AG04449 (cell line): ENCODE measurements at regions of chr16 and their contacts with region 1.

Region 1: GRCh38 chr16:84062734-84063640 is 20.4 kb upstream of the SLC38A8 start:
- DNase-seq: no peak
- H3K4me3 ChIP-seq: no peak overlapping the region
- CTCF ChIP-seq: peak; percentile 95

Region 2: DNA sequence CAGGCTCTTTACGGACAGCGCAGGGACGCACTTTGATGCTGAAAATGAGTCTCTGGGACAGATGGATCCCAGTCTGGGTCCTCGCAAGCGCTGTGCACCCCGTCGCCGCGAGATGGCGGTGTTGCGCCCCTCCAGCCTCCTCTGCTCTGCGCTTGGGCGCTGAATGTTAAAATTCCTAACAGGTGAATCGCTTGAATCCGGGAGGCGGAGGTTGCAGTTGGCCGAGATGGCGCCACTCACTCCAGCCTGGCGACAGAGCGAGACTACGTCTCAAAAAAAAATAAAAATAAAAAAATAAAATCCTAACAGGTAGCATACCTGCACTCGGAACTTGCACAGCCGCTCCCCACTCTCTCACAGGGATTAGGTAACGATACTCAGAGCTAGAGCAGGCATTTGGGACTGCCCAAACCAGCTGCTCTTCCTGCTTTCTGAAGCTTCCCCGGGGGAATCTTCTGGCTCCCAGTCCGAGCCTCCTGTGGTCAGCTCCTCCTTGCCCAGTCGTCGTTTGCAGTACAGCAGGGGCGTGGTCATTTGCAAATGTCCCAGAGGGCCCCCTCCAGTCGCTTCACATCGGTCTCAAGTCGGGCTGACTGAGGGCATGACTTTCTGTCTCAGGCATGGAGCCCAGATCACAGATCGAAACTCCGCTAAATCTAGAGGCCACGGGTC is 136.1 kb before region 1 on chr16:
- CTCF ChIA-PET with region 1: interaction called, 175 read pairs
- POLR2A ChIA-PET with region 1: no interaction called
- DNase-seq: no peak
- H3K4me3 ChIP-seq: peak overlapping the region; percentile 19; the same call in 1 of the 2 replicates
- CTCF ChIP-seq: peak; percentile 97

Region 3: DNA sequence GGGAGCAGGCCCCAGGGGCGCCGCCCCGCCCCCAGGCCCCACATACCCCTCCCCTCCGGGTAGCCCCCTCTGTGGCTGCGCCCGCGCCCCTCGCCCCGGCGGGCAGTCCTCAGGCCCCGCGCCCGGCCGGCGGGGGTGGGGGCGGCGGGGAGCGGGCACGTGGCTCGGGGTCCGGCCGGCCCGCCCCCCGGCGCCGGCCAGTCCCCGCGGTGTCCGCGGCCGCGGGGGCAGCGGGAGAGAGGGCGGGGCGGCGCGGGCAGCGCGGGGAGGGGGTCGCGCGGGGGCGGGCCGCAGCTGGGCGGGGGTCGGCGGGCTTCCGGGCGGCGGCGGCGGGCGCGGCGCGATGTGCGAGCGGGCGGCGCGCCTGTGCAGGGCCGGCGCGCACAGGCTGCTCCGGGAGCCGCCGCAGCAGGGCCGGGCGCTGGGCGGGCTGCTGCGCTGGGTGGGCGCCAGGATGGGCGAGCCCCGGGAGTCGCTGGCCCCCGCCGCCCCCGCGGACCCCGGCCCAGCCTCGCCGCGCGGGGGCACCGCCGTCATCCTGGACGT is 94.6 kb before region 1 on chr16:
- CTCF ChIA-PET with region 1: interaction called, 662 read pairs
- POLR2A ChIA-PET with region 1: no interaction called
- DNase-seq: no peak
- H3K4me3 ChIP-seq: peak overlapping the region; percentile 42
- CTCF ChIP-seq: no peak

Region 4: DNA sequence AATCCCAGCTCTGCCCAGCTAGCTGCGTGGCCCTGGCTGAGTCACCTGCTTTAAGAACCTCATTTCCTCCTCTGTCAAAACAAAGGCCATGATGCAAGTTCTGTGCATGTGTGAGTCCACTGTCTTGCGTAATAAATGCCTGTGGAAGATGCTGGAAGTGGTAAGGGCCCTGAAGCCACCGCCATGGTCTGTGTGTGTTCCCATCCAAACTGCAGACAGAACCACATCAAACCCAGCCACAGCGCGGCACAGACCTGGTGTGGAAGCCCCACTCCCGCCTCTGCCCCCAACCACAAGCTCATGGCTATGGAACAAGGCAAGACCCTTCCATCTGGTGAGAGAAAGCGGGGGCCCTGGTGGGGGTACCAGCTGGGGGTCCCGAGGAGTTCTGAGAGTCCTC is 68.9 kb before region 1 on chr16:
- CTCF ChIA-PET with region 1: interaction called, 21 read pairs
- POLR2A ChIA-PET with region 1: no interaction called
- DNase-seq: peak; percentile 76
- H3K4me3 ChIP-seq: no peak overlapping the region
- CTCF ChIP-seq: no peak

Region 5: DNA sequence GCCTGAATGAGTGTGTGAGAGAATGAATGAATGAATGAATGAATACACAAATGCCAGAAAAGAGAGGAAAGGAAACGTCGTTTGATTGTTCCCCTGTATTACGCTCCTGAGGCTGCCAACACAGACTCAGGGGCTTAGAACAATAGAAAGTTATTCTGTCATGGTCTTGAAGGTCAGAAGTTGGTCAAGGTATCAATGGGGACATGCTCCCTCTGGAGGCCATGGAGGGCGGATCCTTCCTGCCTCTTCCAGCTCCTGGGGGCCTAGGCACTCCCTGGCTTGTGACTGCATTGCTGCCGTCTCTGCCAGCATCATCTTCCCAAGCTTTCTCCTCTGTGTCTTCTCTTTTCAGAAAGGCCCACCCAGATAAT is 18.9 kb before region 1 on chr16:
- CTCF ChIA-PET with region 1: interaction called, 14 read pairs
- POLR2A ChIA-PET with region 1: no interaction called
- DNase-seq: no peak
- H3K4me3 ChIP-seq: no peak overlapping the region
- CTCF ChIP-seq: peak; percentile 30

Region 6: GRCh38 chr16:84132527-84133285 is 69.7 kb after region 1 on chr16:
- CTCF ChIA-PET with region 1: interaction called, 13 read pairs
- POLR2A ChIA-PET with region 1: no interaction called
- DNase-seq: no peak
- H3K4me3 ChIP-seq: no peak overlapping the region
- CTCF ChIP-seq: no peak

Region 7: DNA sequence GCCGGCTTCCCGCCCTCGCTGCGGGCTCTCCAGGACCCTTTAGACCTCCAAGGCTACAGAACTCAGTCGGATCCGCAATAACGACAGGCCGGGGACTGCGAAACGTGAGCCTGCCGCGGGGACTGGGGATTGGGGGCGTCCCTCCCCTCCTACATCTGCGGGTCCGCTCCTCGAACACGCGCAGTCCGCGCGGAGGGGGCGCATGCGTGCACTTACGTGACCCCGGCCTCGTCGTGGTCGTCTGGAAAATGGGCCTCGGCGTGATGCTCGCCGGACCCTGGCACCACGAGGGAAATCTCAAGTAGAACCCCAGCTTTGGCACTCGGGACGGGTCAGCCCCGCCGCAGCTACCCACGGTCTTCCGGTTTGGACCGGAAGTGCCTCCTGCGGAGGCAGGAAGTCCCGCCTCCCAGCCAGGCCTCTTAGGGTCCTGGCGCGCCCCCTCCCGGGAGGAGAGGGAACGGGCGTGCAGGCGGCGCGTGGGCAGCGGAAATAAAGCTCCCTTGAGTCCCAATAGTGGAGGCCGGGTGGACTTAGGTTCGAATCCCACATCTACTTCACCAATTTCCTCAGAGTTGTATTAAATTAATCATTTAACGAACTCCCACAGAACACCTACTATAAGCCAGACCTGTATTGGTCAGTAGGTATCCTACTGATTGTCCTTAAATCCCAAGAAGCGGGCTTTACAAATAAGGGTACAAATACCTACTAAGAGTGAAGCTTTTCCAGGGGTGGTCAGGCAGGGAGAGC is 123.9 kb after region 1 on chr16 and contains the start of gene TAF1C:
- CTCF ChIA-PET with region 1: interaction called, 10 read pairs
- POLR2A ChIA-PET with region 1: no interaction called
- DNase-seq: peak; percentile 68
- H3K4me3 ChIP-seq: peak within 1 kb of the TSS; percentile 89
- CTCF ChIP-seq: peak; percentile 99